Activated naive CD4-positive, alpha-beta T cell treated with anti-CD3 and anti-CD28 coated beads for 36 hours (primary cell): ENCODE measurements at regions of chr17 and their contacts with region 1.

Region 1: DNA sequence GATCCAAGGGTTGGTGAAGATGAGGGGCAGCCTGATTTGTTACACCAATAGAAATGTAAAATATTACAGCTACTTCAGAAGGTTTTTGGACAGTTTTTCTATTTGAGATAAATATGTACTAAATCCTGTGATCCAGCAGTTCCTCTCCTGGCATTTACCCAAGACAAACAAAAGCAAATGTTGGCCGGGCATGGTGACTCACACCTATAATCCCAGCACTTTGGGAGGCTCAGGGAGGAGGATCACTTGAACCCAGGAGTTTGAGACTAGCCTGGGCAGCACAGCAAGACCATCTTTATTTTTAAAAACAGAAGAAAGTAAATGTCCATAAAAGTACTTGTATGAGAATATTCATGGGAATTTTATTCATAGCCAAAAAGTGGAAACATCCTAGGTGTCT is 64.8 kb upstream of the MRC2 start:
- DNase-seq: no peak
- H3K4me3 Mint-ChIP-seq: no peak overlapping the region
- H3K27ac Mint-ChIP-seq: no peak overlapping the region
- H3K4me1 Mint-ChIP-seq: peaks cover 24% of the 10 kb centered on the region
- H3K27me3 Mint-ChIP-seq: no peaks in the 10 kb centered on the region

Region 2: GRCh38 chr17:62703775-62704378 is 141.2 kb after region 1 on chr17:
- CTCF ChIA-PET with region 1: no interaction called
- intact Hi-C with region 1: loop called (anchors 10 kb)
- DNase-seq: peak; percentile 71
- H3K4me3 Mint-ChIP-seq: peak overlapping the region; percentile 34
- H3K27ac Mint-ChIP-seq: no peak overlapping the region
- H3K4me1 Mint-ChIP-seq: peaks cover 4% of the 10 kb centered on the region
- H3K27me3 Mint-ChIP-seq: peaks cover 34% of the 10 kb centered on the region